Activated CD4-positive, alpha-beta memory T cell treated with anti-CD3 and anti-CD28 coated beads for 36 hours (primary cell): ENCODE measurements at regions of chrX and their contacts with region 1.

Region 1: DNA sequence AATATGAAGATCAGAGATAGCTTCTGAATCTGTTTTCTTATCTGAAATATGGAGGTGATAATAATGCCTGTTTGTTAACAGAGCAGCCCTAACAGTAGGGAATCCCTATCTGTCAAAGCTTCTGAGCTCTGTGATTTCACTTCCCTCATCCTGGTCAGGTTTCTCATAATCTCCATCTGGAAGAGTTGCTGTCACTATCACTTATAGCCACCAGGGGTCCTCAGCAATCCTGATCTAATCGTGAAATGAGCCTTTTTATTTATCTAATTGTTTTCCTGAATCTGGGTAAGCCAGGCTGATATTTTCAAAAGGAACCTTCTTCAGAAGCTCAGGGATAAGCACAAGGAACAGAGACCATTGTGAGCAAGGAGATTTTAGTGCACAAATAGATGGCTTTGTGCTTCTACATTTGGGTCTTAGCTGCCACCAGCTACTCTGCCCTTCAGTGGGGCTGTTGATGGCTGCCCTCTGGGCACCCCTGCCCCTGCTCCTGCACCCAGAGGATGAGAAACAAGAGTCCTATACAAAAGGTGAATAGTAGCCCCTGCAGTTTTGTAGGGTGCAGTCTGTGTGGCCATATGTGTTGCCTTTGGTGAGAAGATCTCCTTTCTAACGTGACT is 196.4 kb upstream of the RADX start:
- DNase-seq: no peak
- H3K4me3 Mint-ChIP-seq: no peak overlapping the region
- H3K27ac Mint-ChIP-seq: no peak overlapping the region
- H3K4me1 Mint-ChIP-seq: no peaks in the 10 kb centered on the region
- H3K27me3 Mint-ChIP-seq: no peaks in the 10 kb centered on the region

Region 2: DNA sequence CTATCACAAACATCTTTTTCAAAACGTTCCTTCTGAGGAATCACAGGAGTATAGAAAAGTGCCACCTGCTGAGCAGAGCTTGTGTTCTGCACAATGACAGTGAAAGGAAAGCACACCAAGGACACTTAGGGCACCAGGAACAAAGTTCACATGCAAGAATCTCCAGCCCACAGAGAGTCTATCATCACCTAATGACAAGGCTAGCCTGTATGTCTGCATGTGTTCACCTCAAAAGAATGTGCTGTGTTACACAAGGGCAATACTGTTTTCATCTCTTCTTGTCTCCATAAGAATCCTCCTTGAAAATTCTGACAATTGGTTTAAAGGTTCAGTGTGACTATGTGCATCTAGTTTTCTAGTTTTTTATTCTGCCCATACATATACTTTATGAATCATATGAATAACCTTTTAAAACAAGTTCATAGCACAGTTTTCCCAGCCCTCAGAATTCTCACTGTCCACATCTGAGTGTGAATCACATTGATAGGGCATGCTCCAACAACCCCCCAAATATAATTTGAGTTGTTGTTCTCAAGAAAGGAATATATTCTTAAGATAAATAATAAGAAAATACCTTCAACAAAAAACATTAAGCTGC is 129.2 kb before region 1 on chrX:
- CTCF ChIA-PET with region 1: no interaction called
- POLR2A ChIA-PET with region 1: no interaction called
- intact Hi-C with region 1: no loop called
- DNase-seq: no peak
- H3K4me3 Mint-ChIP-seq: no peak overlapping the region
- H3K27ac Mint-ChIP-seq: no peak overlapping the region
- H3K4me1 Mint-ChIP-seq: no peaks in the 10 kb centered on the region
- H3K27me3 Mint-ChIP-seq: no peaks in the 10 kb centered on the region

Region 3: DNA sequence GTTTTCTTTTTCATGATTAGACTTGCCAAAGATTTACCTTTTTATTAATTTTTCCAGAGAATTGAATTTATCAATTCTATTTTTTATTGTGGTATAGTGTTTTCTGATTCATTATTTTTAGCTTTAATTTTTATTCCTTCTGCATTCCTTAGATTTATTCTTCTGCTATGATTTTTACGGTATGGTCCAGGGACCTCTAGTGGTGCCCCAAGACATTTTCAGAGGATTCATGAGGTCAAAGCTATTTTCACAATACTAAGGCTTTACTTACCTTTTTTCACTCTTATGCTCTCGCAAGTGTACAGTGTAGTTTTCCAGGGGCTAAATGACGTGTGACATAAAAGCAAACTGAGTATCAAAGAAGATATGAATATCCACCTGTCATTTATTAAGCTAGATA is 204.4 kb after region 1 on chrX:
- CTCF ChIA-PET with region 1: interaction called, 12 read pairs
- POLR2A ChIA-PET with region 1: no interaction called
- intact Hi-C with region 1: no loop called
- DNase-seq: no peak
- H3K4me3 Mint-ChIP-seq: no peak overlapping the region
- H3K27ac Mint-ChIP-seq: no peak overlapping the region
- H3K4me1 Mint-ChIP-seq: peaks cover 9% of the 10 kb centered on the region
- H3K27me3 Mint-ChIP-seq: no peaks in the 10 kb centered on the region

Region 4: DNA sequence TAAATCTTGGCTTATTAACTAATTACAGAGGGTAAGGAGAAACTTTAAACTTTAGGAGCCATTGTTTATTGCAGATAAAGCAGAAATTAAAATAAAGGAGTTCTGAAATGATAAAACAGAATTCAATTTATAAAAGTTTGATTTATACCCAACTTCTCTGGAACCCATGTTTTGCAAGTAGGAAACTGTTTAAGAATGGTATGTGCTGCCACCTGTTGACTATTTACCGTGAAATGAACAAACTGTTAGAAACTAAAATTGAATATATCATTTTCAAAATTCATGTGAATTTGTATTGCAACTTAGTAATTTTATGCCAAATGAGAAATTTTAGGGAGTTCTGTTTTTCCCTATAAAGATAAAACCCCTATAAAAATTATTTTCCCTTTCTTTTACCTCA is 376.1 kb after region 1 on chrX:
- CTCF ChIA-PET with region 1: interaction called, 5 read pairs
- POLR2A ChIA-PET with region 1: no interaction called
- intact Hi-C with region 1: loop called (anchors 5 kb)
- DNase-seq: no peak
- H3K4me3 Mint-ChIP-seq: no peak overlapping the region
- H3K27ac Mint-ChIP-seq: no peak overlapping the region
- H3K4me1 Mint-ChIP-seq: no peaks in the 10 kb centered on the region
- H3K27me3 Mint-ChIP-seq: no peaks in the 10 kb centered on the region